ENCODE measurements at regions of chr2 and their contacts with region 1.

Region 1: GRCh38 chr2:179749210-179749609 is 112.2 kb downstream of the ZNF385B start:
- DNase-seq: no peak
- H3K4me3 ChIP-seq: no peak overlapping the region
- H3K27ac ChIP-seq: no peak overlapping the region
- H3K4me1 ChIP-seq: no peaks in the 10 kb centered on the region
- H3K27me3 ChIP-seq: no peaks in the 10 kb centered on the region
- CTCF ChIP-seq: no peak
- POLR2A ChIP-seq: no peak

Region 2: DNA sequence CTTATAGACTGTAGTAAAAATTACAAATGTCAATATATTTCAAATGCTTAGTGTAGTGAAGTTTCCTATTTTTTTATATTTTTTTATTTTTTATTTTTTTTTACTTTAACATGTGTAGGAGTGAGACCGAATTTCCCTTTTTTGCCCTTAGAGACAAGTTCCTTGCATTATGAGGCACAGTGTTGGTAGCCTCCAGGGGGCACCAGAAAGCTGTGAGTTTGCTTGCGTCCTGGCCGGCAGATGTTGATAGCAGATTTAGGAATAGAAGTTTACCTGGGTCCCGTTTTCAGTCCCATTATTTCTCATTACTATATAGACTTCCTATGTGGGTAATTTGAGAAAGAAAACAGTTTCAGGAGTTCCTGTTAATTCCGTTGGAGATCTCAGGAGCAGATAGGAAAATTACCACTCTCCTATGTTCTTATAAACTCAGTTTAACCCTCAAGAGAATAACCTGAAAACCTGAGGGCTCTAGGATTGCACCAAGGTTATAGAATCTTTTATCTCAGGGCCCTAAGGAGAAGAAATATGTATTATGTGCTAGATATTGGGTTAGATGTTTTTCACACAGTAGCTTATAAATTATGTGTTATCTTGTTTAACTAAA is 327.1 kb before region 1 on chr2:
- intact Hi-C with region 1: loop called (anchors 10 kb)
- DNase-seq: no peak
- H3K4me3 ChIP-seq: no peak overlapping the region
- H3K27ac ChIP-seq: no peak overlapping the region
- H3K4me1 ChIP-seq: no peaks in the 10 kb centered on the region
- H3K27me3 ChIP-seq: no peaks in the 10 kb centered on the region
- CTCF ChIP-seq: peak; percentile 21 to 67 (median 62)
- POLR2A ChIP-seq: no peak

Measured in esophagus squamous epithelium (tissue), 5 donors.